ENCODE measurements at regions of chrX and their contacts with region 1.

Region 1: DNA sequence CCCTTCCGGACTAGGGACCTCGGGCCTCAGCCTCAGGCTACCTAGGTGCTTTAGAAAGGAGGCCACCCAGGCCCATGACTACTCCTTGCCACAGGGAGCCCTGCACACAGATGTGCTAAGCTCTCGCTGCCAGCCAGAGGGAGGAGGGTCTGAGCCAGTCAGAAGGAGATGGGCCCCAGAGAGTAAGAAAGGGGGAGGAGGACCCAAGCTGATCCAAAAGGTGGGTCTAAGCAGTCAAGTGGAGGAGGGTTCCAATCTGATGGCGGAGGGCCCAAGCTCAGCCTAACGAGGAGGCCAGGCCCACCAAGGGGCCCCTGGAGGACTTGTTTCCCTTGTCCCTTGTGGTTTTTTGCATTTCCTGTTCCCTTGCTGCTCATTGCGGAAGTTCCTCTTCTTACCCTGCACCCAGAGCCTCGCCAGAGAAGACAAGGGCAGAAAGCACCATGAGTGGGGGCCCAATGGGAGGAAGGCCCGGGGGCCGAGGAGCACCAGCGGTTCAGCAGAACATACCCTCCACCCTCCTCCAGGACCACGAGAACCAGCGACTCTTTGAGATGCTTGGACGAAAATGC is at the start of gene WAS:
- DNase-seq: peak in 9 of 10 donors; percentile 22 to 66 (median 38)
- ATAC-seq: peak; percentile 87 to 88
- H3K4me3 Mint-ChIP-seq: peak within 1 kb of the TSS; percentile 89 to 96 (median 94)
- H3K27ac Mint-ChIP-seq: peak within 1 kb of the TSS; percentile 92 to 97 (median 96)
- H3K4me1 Mint-ChIP-seq: peaks cover 28 to 67% (median 55%) of the 10 kb centered on the region in 4 donors
- H3K27me3 Mint-ChIP-seq: no peaks in the 10 kb centered on the region
- polyA plus RNA-seq, gene WAS: 13.9 to 25.1 (median 19.7) TPM

Region 2: DNA sequence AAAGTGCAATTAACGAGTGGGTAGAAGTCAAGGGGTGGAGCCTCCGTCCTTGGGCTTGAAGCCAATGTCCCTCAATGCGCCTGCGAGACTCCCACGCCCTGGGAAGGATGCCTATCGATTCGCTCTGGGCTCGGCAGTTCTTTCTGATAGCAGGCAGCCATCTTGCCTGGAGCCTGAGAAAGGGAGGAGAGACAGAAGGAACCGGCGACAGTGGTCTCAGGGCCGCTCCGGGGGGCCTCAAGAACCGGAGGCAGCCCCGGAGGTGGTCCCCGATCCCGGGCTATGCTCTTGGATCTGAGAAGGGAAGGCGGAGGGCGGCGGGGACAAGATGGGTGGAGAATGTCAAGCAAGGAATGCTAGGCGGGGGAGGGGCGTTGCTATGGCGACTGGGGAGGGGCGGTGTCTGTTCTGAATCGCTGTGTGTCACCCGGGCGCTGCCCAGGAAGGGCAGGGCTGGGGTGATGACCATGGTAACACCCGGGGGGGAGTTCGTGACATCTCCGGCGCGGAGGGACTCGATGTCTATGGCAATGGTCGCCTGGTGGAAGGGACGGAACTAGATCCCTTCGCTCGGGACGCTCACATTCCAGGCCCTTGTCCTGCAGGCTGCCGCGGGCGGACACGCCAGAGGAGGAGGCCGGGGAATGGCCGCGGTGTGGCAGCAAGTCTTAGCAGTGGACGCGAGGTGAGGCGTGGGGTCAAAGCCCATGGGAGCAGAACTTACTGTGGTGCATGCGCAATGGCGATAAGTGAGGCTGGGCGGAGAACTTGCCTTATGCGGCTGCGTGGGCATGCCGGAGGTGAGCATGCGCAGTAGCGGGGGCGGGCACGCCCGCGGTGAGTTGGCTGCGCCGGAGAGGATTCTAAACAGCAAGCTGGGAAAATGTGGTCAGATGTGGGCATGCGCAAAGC is 85.9 kb before region 1 on chrX and contains the start of gene WDR13:
- POLR2A ChIA-PET with region 1: no interaction called
- DNase-seq: peak; percentile 84 to 96 (median 89)
- ATAC-seq: peak; percentile 83
- H3K4me3 Mint-ChIP-seq: peak within 1 kb of the TSS; percentile 94 to 98 (median 96)
- H3K27ac Mint-ChIP-seq: peak within 1 kb of the TSS; percentile 98 to 100 (median 99)
- H3K4me1 Mint-ChIP-seq: peaks cover 7 to 18% (median 9%) of the 10 kb centered on the region in 4 donors
- H3K27me3 Mint-ChIP-seq: peaks cover 0 to 2% (median 0%) of the 10 kb centered on the region in 5 donors
- polyA plus RNA-seq, gene WDR13: 32.2 to 45.5 (median 40.6) TPM

Region 3: GRCh38 chrX:48751343-48751742 is 67.8 kb after region 1 on chrX:
- POLR2A ChIA-PET with region 1: no interaction called
- DNase-seq: no peak
- ATAC-seq: no peak
- H3K4me3 Mint-ChIP-seq: no peak overlapping the region
- H3K27ac Mint-ChIP-seq: peak overlapping the region in 2 of 10 donors; percentile 24 to 60
- H3K4me1 Mint-ChIP-seq: peaks cover 0 to 3% (median 1%) of the 10 kb centered on the region in 4 donors
- H3K27me3 Mint-ChIP-seq: peaks cover 0 to 2% (median 0%) of the 10 kb centered on the region in 5 donors

Region 4: GRCh38 chrX:48789366-48790220 is 106.1 kb after region 1 on chrX:
- POLR2A ChIA-PET with region 1: no interaction called
- DNase-seq: peak in 2 of 10 donors; percentile 18 to 19
- ATAC-seq: peak in 1 of 2 donors; percentile 83
- H3K4me3 Mint-ChIP-seq: peak overlapping the region in 5 of 10 donors; percentile 36 to 75 (median 64)
- H3K27ac Mint-ChIP-seq: peak overlapping the region in 9 of 10 donors; percentile 37 to 95 (median 72)
- H3K4me1 Mint-ChIP-seq: peaks cover 13 to 24% (median 16%) of the 10 kb centered on the region in 4 donors
- H3K27me3 Mint-ChIP-seq: no peaks in the 10 kb centered on the region

Region 5: GRCh38 chrX:48801280-48802088 is 118.0 kb after region 1 on chrX and contains the start of gene HDAC6:
- POLR2A ChIA-PET with region 1: interaction called, 14 read pairs
- DNase-seq: peak; percentile 85 to 97 (median 95)
- ATAC-seq: peak; percentile 87
- H3K4me3 Mint-ChIP-seq: peak within 1 kb of the TSS; percentile 94 to 98 (median 96)
- H3K27ac Mint-ChIP-seq: peak within 1 kb of the TSS; percentile 95 to 99 (median 98)
- H3K4me1 Mint-ChIP-seq: peaks cover 10 to 21% (median 19%) of the 10 kb centered on the region in 4 donors
- H3K27me3 Mint-ChIP-seq: no peaks in the 10 kb centered on the region
- polyA plus RNA-seq, gene HDAC6: 10.5 to 15.9 (median 13.0) TPM

Measured in naive thymus-derived CD8-positive, alpha-beta T cell (primary cell).